ENCODE measurements at regions of chr3 and their contacts with region 1.

Region 1: DNA sequence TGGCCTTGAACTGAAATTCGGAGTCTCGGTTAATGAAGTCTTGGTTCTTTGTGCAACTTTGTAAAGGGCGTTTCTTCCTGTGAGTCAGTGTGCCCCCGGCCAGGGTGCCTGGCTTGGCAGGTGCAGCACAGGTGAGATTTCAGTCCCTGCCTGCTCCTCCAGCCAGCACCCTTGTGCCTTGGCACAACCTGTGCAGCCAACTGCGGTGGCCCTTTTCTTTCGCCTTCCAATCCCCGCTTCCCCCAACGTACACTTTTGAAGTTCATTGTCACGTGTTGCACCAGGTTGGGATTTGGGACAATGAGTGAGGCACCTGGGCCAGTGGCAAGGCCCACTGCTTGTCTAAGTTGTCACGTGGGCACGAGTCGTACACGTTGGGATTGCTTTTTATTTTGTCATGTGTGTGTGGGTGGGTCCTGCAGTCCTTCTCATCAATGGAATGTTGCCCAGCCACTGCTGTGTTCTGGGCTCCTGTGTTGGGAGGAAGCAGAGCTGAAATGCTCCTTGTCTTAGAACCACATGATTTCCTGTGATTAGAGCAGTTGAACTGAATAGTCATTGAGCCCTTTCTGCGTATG is 242.9 kb upstream of the BHLHE40 start:
- DNase-seq: peak; percentile 93
- H3K4me3 ChIP-seq: no peak overlapping the region
- H3K27ac ChIP-seq: peak overlapping the region; percentile 39
- H3K4me1 ChIP-seq: peaks cover 40% of the 10 kb centered on the region
- H3K27me3 ChIP-seq: no peaks in the 10 kb centered on the region
- CTCF ChIP-seq: no peak

Region 2: DNA sequence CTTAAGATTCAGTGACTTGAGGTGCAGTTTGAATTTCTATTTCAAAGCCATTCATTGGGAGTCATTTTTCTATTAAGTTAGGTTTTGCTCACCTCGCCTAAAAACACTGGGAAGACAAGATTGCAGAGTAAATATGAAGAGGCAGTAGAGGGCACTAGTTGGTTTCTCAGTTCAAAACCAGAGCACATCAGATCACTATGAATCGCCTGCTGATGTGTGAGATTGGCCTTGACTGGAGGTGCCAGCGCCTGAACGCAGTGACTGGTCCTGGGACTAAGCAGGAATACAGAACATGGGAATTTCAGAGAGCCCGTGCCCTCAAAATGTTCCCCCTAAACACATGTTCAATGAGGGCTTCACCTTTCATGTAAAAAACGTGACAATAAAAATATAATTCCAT is 14.3 kb before region 1 on chr3:
- CTCF ChIA-PET with region 1: no interaction called
- dilution Hi-C with region 1: no loop called
- in situ Hi-C with region 1: no loop called
- intact Hi-C with region 1: no loop called
- DNase-seq: peak; percentile 81
- H3K4me3 ChIP-seq: no peak overlapping the region
- H3K27ac ChIP-seq: peak overlapping the region; percentile 71
- H3K4me1 ChIP-seq: peaks cover 32% of the 10 kb centered on the region
- H3K27me3 ChIP-seq: no peaks in the 10 kb centered on the region
- CTCF ChIP-seq: peak; percentile 37 to 61

Region 3: GRCh38 chr3:4838621-4839022 is 102.2 kb after region 1 on chr3:
- CTCF ChIA-PET with region 1: no interaction called
- dilution Hi-C with region 1: loop called (anchors 5 kb)
- in situ Hi-C with region 1: no loop called
- intact Hi-C with region 1: no loop called
- DNase-seq: no peak
- H3K4me3 ChIP-seq: no peak overlapping the region
- H3K27ac ChIP-seq: no peak overlapping the region
- H3K4me1 ChIP-seq: peaks cover 5% of the 10 kb centered on the region
- H3K27me3 ChIP-seq: no peaks in the 10 kb centered on the region
- CTCF ChIP-seq: no peak

Region 4: DNA sequence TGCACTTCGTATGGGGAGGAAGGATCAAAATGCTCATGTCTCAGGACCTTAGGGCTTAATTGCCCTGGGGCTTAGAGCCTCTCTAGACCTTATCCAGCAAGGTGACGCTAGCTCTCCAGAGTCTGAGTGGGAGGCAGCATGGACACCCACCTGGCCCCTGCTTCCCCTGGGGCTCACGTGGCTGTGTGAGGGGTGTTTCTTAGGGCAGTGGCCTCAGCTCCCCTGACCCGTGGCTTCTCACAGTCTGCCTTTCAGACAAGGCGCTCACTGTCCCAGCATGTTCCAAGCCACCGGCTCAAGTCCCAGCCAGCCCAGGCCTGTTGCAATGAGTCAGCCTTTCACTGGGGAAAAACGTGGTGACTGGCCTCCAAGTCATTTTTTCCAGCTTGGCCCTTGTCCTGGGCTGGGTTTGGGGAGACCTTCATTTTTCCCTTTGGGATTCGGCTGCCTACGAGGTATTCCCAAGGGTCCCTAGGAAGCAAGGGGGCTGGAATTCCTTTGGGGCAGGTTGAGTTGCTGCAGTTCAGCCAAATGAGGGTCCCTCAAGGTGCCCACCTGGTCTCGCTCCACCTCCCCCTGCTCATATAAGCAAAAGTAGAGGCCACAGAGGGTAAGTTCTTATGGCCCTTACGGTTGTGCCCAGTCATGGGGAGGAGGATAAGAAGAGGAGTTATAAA is 258.6 kb after region 1 on chr3:
- CTCF ChIA-PET with region 1: no interaction called
- dilution Hi-C with region 1: loop called (anchors 5 kb)
- in situ Hi-C with region 1: no loop called
- intact Hi-C with region 1: no loop called
- DNase-seq: peak; percentile 99
- H3K4me3 ChIP-seq: no peak overlapping the region
- H3K27ac ChIP-seq: peak overlapping the region; percentile 98
- H3K4me1 ChIP-seq: peaks cover 42% of the 10 kb centered on the region
- H3K27me3 ChIP-seq: no peaks in the 10 kb centered on the region
- CTCF ChIP-seq: no peak

Region 5: DNA sequence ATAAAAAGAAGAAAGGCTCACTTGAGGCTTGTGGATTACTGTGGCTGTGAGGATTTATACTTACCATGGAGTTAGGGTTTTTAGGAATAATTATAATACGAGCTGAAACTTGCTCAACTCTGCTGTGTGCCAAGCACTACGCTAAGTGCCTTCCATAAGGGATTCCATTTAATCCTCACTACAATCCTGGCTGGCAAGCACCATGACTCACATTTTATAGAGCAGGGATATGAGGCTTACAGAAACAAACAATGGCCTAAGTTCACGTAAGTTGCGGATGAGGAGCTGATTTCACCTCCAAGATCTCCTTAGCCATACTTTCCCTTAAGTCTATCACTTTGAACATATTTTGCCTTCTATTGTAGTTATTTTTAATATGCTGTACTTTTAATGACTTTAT is 341.8 kb after region 1 on chr3:
- CTCF ChIA-PET with region 1: no interaction called
- dilution Hi-C with region 1: loop called (anchors 5 kb)
- in situ Hi-C with region 1: no loop called
- intact Hi-C with region 1: no loop called
- DNase-seq: peak; percentile 82
- H3K4me3 ChIP-seq: no peak overlapping the region
- H3K27ac ChIP-seq: no peak overlapping the region
- H3K4me1 ChIP-seq: peaks cover 2% of the 10 kb centered on the region
- H3K27me3 ChIP-seq: no peaks in the 10 kb centered on the region
- CTCF ChIP-seq: no peak

Measured in mammary epithelial cell (primary cell).